B cell (primary cell): ENCODE measurements at regions of chr12 and their contacts with region 1.

Region 1: GRCh38 chr12:12813120-12814101 is at the start of gene DDX47:
- DNase-seq: peak; percentile 96
- ATAC-seq: peak; percentile 75
- H3K4me3 ChIP-seq: peak within 1 kb of the TSS; percentile 81 to 100 (median 94)
- H3K4me3 Mint-ChIP-seq: peak within 1 kb of the TSS; percentile 91
- H3K27ac ChIP-seq: peak within 1 kb of the TSS; percentile 86 to 94
- H3K27ac Mint-ChIP-seq: peak within 1 kb of the TSS; percentile 91
- H3K4me1 ChIP-seq: peaks cover 24 to 41% of the 10 kb centered on the region in 2 donors
- H3K4me1 Mint-ChIP-seq: peaks cover 66% of the 10 kb centered on the region
- H3K27me3 ChIP-seq: no peaks in the 10 kb centered on the region
- H3K27me3 Mint-ChIP-seq: no peaks in the 10 kb centered on the region
- CTCF ChIP-seq: peak; percentile 92
- total RNA-seq, gene DDX47: 89.1 and 93.7 TPM in 2 replicates

Region 2: DNA sequence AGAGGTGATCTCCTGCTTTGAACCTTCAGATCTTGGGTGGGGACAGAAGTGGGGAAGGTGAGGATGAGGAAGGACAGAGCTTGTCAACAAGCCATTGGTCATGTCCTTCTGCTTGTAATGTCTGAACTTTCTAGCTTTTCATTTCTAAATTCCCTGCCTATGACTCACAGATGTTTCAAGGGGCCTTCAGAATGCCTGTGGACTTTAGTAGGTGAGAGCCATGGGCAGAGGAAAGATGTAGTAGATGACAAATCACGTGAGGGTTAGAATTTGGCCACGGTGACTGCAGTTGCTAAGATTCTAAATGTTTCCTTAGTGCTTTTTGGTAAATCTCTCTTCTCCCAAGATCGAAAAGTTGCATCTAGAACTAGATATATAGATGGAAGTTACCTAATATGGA is 220.5 kb before region 1 on chr12:
- CTCF ChIA-PET with region 1: no interaction called
- POLR2A ChIA-PET with region 1: no interaction called
- intact Hi-C with region 1: no loop called
- DNase-seq: no peak
- ATAC-seq: no peak
- H3K4me3 ChIP-seq: no peak overlapping the region
- H3K4me3 Mint-ChIP-seq: no peak overlapping the region
- H3K27ac ChIP-seq: no peak overlapping the region
- H3K27ac Mint-ChIP-seq: no peak overlapping the region
- H3K4me1 ChIP-seq: no peaks in the 10 kb centered on the region
- H3K4me1 Mint-ChIP-seq: no peaks in the 10 kb centered on the region
- H3K27me3 ChIP-seq: peaks cover 0 to 7% (median 2%) of the 10 kb centered on the region in 4 experiments
- H3K27me3 Mint-ChIP-seq: peaks cover 7% of the 10 kb centered on the region
- CTCF ChIP-seq: no peak

Region 3: GRCh38 chr12:12724661-12725545 is 88.5 kb before region 1 on chr12:
- CTCF ChIA-PET with region 1: no interaction called
- POLR2A ChIA-PET with region 1: interaction called, 11 read pairs
- intact Hi-C with region 1: loop called (anchors 1 kb)
- DNase-seq: no peak
- ATAC-seq: peak; percentile 65
- H3K4me3 ChIP-seq: peak overlapping the region; percentile 74 to 88 (median 78)
- H3K4me3 Mint-ChIP-seq: peak overlapping the region; percentile 87
- H3K27ac ChIP-seq: peak overlapping the region; percentile 94 to 97
- H3K27ac Mint-ChIP-seq: peak overlapping the region; percentile 94
- H3K4me1 ChIP-seq: peaks cover 22 to 30% of the 10 kb centered on the region in 2 donors
- H3K4me1 Mint-ChIP-seq: peaks cover 52% of the 10 kb centered on the region
- H3K27me3 ChIP-seq: no peaks in the 10 kb centered on the region
- H3K27me3 Mint-ChIP-seq: no peaks in the 10 kb centered on the region
- CTCF ChIP-seq: peak; percentile 10

Region 4: DNA sequence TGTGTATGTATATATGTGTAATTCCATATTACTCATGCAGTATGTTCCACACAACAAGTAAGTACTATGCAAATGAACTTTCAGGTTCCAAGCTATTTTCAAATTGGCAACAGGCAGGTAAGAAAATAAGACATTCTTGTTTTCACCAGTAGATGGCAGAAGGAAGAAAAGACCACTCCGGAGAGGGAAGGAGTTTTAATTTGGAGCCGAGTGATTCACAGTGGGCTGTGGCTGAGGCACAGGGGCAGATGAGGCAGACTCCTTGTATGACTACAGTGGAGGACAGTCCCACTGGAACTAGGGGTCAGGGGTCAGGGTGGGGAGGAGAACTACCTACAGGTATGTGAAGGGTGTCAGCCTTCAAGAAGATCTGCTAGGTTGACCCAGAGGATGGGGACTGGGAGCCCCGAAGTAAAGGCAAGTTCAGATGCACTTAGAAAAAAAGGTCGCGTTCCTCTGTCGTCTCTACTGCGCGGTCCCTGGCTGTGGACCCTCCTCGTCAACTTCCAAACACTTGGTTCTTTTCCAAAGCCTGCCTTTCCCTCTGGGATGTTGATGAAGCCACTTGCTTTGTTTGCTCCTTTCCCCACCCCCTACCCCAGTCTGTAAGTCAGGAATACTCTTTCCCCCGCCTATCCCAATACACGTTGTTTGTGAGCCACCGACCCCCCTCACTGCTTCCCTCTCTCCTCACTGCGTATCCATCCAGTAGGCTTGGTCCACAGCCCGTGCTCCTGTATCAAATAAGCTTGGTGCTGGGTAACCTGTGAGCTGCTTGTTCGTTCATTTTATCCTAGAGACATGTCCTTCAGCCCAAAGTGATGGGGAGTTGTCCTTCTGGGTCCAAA is 23.8 kb after region 1 on chr12:
- CTCF ChIA-PET with region 1: interaction called, 14 read pairs
- POLR2A ChIA-PET with region 1: no interaction called
- intact Hi-C with region 1: no loop called
- DNase-seq: peak; percentile 55
- ATAC-seq: peak; percentile 56
- H3K4me3 ChIP-seq: no peak overlapping the region
- H3K4me3 Mint-ChIP-seq: no peak overlapping the region
- H3K27ac ChIP-seq: no peak overlapping the region
- H3K27ac Mint-ChIP-seq: no peak overlapping the region
- H3K4me1 ChIP-seq: peaks cover 0 to 4% of the 10 kb centered on the region in 2 donors
- H3K4me1 Mint-ChIP-seq: peaks cover 5% of the 10 kb centered on the region
- H3K27me3 ChIP-seq: no peaks in the 10 kb centered on the region
- H3K27me3 Mint-ChIP-seq: no peaks in the 10 kb centered on the region
- CTCF ChIP-seq: peak; percentile 68